Calu3 (cell line): ENCODE measurements at regions of chr17 and their contacts with region 1.

Region 1: GRCh38 chr17:39927101-39927928 is at the starts of genes LRRC3C and ORMDL3:
- DNase-seq: no peak
- H3K4me3 Mint-ChIP-seq: peak within 1 kb of the TSS; percentile 74
- H3K27ac Mint-ChIP-seq: peak within 1 kb of the TSS; percentile 66
- H3K4me1 Mint-ChIP-seq: peaks cover 60% of the 10 kb centered on the region
- H3K27me3 Mint-ChIP-seq: no peaks in the 10 kb centered on the region
- CTCF ChIP-seq: no peak
- total RNA-seq, gene LRRC3C: not detected in 2 replicates
- total RNA-seq, gene ORMDL3: 1,738 and 1,968 TPM in 2 replicates

Region 2: DNA sequence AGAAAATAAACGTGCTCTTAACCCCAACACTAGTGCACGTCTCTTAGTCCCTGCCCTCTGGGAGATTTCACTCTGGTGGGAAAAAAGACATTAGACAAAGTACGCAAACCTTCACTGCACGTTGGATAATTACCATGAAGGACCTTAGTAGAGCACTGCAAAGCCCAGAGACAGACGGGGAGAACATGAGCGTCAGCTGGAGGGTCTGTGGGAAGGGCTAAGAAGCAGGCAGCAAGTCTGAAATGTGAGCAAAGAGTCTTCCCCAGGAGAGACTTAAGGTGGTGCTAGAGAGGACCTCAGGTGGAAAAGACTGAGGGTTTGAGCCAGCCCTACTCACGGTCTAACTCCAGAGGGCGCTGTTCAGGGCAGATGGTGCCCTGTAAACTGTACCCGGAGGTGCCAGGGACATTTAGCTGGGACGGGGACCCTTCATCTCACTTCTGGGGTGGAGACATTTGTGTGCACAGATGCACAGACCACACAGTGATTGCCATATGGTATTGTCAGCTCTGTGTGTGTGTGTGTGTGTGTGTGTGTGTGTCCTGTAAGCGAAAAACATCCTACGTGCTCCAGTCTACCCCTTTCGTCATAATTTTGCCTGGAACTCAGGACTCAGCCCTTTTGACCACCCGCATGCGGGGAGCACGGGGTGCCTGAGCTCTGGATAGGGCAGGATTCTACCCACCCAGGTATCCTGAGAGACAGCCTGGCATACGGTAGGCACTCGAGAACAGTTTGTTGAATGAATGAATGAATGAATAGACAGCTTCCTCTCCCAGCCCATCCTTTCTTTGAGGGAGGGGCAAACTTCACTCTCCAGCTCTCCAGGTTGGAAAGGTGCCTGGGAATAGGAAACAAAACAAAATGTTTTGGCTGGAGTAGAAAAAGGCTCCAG is 691.5 kb before region 1 on chr17:
- CTCF ChIA-PET with region 1: no interaction called
- intact Hi-C with region 1: no loop called
- DNase-seq: peak; percentile 88
- H3K4me3 Mint-ChIP-seq: no peak overlapping the region
- H3K27ac Mint-ChIP-seq: no peak overlapping the region
- H3K4me1 Mint-ChIP-seq: peaks cover 49% of the 10 kb centered on the region
- H3K27me3 Mint-ChIP-seq: peaks cover 28% of the 10 kb centered on the region
- CTCF ChIP-seq: peak; percentile 100

Region 3: DNA sequence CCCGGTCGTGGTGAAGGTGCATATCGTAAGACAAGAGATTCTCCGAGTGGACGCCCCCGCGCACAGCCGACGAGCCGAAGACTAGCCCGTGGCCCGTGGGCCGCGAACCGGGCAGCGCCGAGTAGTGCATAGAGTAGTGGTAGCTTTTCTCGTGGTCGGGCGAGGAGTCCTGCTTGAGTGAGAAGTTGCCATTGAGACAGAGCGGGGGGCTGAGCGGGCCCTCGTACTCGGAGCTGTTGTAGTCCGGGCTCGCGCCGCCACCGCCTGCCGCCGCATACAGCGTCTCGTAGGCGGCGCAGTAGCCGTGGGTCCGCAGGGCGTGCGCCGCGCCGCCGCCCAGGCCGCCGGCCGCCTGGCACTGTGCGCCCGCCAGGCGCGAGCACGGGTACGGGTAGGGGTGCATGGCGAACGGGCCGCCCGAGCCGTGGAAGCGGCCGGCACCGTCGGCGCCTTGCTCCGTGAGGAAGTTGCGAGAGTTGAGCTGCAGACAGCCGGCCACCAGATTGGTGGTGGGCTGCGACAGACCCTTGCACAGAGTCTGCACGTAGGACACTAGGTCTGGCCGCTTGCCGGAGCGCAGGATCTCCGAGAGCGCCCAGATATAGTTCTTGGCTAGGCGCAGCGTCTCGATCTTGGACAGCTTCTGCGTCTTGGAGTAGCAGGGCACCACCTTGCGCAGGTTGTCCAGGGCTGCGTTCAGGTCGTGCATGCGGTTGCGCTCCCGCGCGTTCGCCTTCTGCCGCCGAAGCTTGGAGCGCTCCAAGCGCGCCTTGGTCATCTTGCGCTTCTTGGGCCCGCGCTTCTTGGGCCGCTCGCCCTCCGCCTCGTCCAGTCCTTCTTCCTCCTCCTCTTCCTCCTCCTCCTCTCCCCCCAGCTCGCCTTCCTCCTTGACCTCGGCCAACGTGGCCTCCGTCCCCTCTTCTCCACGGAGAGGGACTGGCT is 321.6 kb before region 1 on chr17:
- CTCF ChIA-PET with region 1: interaction called, 4,313 read pairs
- intact Hi-C with region 1: no loop called
- DNase-seq: peak; percentile 97
- H3K4me3 Mint-ChIP-seq: peak overlapping the region; percentile 61
- H3K27ac Mint-ChIP-seq: no peak overlapping the region
- H3K4me1 Mint-ChIP-seq: peaks cover 46% of the 10 kb centered on the region
- H3K27me3 Mint-ChIP-seq: peaks cover 100% of the 10 kb centered on the region
- CTCF ChIP-seq: no peak

Region 4: GRCh38 chr17:39717660-39718059 is 209.7 kb before region 1 on chr17:
- CTCF ChIA-PET with region 1: interaction called, 8,195 read pairs
- intact Hi-C with region 1: no loop called
- DNase-seq: no peak
- H3K4me3 Mint-ChIP-seq: no peak overlapping the region
- H3K27ac Mint-ChIP-seq: peak overlapping the region; percentile 2
- H3K4me1 Mint-ChIP-seq: peaks cover 21% of the 10 kb centered on the region
- H3K27me3 Mint-ChIP-seq: no peaks in the 10 kb centered on the region
- CTCF ChIP-seq: no peak

Region 5: DNA sequence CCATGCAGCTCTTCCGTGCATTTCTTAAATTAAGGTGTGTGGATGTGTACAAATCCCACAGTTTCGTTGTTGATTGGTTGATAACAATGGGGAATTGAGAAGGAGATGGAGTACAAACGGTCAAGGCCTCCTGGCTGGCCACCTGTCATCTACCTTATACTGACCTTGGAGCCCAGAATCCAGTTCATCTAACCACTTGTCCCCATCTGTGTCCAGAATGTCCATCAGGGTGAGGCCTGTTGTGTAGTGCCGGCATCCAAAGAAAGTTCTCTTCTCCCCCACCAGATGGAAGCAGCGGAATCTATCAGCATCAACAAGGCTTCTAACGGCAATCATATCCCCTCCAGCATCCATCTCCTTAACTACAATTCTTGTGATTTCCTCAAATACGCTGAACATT is 10.4 kb before region 1 on chr17:
- CTCF ChIA-PET with region 1: interaction called, 4,357 read pairs
- intact Hi-C with region 1: no loop called
- DNase-seq: peak; percentile 94
- H3K4me3 Mint-ChIP-seq: no peak overlapping the region
- H3K27ac Mint-ChIP-seq: no peak overlapping the region
- H3K4me1 Mint-ChIP-seq: peaks cover 24% of the 10 kb centered on the region
- H3K27me3 Mint-ChIP-seq: no peaks in the 10 kb centered on the region
- CTCF ChIP-seq: no peak

Region 6: DNA sequence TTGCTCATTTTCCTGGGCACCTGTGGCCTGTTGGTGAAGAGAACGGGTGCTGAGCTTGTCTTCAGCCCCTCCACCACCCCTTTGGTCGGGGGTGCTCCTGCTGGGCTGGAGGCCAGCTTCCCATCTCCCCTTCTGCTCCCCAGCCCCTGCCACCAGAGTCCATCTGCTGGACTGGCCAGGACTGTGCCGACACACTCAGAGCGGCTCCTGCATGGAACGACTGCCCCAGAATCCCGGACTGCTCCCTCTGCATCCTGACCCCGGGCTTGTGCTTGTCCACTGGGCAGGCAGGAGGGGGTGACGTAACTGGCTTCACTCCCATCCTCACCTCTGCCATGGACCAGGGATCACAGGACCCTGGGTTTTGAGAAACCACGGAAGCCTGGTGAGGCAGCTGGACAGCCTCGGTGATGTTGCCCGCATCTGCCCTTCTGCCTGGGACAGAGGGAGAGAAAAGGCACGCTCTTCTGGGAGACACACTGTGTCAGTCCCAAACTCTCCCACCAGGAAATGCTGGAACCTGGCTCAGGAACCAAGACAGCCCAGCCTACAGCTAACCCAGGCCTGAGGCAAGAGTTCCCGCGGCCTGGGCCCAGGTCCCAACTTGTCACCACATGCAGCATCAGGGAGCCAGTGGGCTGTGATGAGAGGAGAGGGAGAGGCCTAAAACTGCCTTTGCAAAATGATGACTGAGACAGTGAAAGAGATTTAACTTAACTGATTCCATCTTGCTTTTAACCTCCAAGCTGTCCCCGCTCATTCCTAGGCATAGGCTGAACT is 19.4 kb after region 1 on chr17:
- CTCF ChIA-PET with region 1: interaction called, 6,506 read pairs
- intact Hi-C with region 1: loop called (anchors 1 kb)
- DNase-seq: peak; percentile 86
- H3K4me3 Mint-ChIP-seq: no peak overlapping the region
- H3K27ac Mint-ChIP-seq: no peak overlapping the region
- H3K4me1 Mint-ChIP-seq: peaks cover 39% of the 10 kb centered on the region
- H3K27me3 Mint-ChIP-seq: peaks cover 57% of the 10 kb centered on the region
- CTCF ChIP-seq: no peak

Region 7: DNA sequence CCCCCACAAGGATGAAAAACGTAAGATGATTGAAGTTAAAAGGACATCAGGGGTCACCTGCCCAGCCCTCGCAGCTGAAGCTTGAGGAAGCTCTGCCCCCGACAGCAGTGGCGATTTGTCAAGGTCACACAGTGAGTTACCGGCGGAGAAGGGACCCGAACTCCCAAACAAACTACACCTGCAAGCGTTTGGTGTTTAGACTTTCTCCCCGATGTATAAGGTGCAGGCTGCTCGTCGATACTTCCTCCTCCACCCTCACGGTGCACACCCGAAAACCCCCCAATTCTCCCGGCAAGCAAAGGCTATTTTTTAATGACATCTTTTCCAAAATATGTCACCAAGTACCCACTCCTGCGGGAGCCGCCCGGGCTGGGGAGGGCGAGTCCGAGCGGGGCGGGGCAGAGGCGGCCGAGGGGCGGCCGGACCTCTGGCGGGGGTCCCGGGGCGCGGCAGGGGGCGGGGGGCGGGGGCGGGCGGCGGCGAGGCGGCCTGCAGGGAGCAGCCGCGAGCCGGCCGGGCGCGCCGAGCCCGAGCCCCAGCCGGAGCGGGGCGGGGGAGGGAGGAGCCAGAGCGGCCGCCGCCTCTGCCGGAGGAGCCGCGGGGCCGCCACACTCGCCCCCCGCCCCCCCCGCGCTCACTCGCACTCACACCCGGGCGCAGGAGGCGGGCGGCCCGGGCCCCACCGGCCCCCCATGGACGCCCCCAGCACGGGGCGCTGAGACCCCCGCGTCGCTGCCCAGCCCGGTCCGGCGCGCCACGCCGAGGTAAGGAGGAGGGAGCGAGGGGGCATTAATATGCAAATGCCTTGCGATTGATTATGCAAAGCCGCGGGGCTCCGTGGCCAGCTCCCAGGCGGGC is 135.2 kb after region 1 on chr17 and contains the start of gene THRA:
- CTCF ChIA-PET with region 1: no interaction called
- intact Hi-C with region 1: no loop called
- DNase-seq: peak; percentile 100
- H3K4me3 Mint-ChIP-seq: peak within 1 kb of the TSS; percentile 54
- H3K27ac Mint-ChIP-seq: peak within 1 kb of the TSS; percentile 27
- H3K4me1 Mint-ChIP-seq: peaks cover 55% of the 10 kb centered on the region
- H3K27me3 Mint-ChIP-seq: peaks cover 52% of the 10 kb centered on the region
- CTCF ChIP-seq: no peak
- total RNA-seq, gene THRA: 107 and 133 TPM in 2 replicates

Region 8: GRCh38 chr17:40121181-40122135 is 194.1 kb after region 1 on chr17 and contains the start of gene MSL1:
- CTCF ChIA-PET with region 1: no interaction called
- intact Hi-C with region 1: no loop called
- DNase-seq: peak; percentile 100
- H3K4me3 Mint-ChIP-seq: peak within 1 kb of the TSS; percentile 86
- H3K27ac Mint-ChIP-seq: peak within 1 kb of the TSS; percentile 53
- H3K4me1 Mint-ChIP-seq: peaks cover 48% of the 10 kb centered on the region
- H3K27me3 Mint-ChIP-seq: no peaks in the 10 kb centered on the region
- CTCF ChIP-seq: no peak
- total RNA-seq, gene MSL1: 505 and 524 TPM in 2 replicates